ENCODE measurements at regions of chr6 and their contacts with region 1.

Region 1: DNA sequence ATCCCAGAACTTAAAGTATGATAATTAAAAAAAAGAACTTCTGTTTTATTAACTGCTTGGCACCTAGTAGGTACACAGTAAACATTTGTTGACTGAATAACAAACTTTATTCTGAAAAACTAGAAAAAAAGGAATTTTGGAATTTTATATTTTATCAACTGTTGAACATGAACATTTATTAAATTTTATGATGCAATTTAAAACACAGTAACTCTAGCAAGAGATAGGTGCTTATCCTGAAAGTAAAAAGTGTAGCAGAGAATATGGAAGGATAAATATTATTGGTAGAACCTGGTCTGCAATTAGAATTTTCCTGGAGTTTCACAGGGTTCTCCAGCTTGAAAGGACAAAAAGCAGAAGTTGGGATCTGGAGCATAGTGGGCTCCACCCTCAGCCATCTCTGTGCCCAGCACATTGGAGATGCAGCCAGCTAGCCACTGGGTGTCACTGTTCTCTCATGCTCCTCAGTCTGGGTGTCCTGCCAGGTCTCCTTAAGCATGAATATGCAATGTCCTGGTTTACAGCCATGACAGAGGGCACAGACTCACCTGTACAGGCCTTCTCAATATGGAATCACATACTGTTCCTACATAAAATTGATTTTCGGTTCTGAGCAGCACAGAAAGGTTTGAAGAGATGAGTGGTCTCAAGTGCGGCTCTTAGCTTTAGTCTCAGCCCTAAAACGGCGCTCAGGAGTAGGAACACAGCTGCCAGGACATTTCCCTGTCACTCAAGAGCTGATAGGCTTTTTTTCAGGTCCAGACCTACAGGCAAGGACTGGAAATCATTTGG is 31.7 kb upstream of the IL20RA start:
- DNase-seq: no peak
- ATAC-seq: peak; percentile 100
- H3K4me3 ChIP-seq: no peak overlapping the region
- H3K27ac ChIP-seq: peak overlapping the region; percentile 42
- H3K4me1 ChIP-seq: peaks cover 7% of the 10 kb centered on the region
- H3K27me3 ChIP-seq: no peaks in the 10 kb centered on the region
- CTCF ChIP-seq: peak; percentile 90 to 96 (median 93); a peak in 5 of 6 replicates
- EP300 ChIP-seq: no peak
- POLR2A ChIP-seq: no peak
- RAD21 ChIP-seq: peak; percentile 96

Region 2: DNA sequence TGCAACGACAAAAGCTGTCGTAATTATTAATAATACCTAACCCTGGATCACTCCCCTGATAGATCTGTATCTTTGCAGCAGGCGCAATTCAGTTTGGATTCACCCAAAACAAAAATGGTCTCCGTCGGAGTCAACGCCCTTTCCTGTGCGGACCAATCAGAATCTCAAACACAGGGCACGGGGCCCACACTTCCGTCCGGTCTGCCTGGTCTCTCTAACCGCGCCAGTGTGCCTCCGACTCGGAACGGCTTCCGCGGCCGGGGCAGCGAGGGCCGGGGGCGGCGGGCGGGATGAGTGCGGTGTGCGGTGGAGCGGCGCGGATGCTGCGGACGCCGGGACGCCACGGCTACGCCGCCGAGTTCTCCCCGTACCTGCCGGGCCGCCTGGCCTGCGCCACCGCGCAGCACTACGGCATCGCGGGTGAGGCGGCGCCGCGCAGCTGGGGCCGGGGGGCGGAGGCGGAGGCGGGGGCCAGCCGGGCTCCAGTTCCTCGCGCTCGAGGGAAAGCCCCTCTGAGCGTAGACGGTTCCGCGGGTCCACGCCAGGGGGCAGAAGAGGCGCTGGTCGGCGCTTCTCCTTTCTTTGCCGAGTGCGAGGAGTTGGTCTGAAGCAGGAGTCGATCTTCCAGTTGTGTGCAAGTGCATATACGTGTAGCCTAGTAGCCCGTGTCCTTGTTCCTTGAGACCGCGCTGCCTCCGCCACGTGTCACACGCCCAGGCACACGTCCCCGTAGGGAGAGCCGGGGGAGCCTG is 253.9 kb before region 1 on chr6 and contains the start of gene PEX7:
- CTCF ChIA-PET with region 1: no interaction called
- POLR2A ChIA-PET with region 1: no interaction called
- RAD21 ChIA-PET with region 1: no interaction called
- SMC1A ChIA-PET with region 1: no interaction called
- in situ Hi-C with region 1: no loop called
- intact Hi-C with region 1: no loop called
- DNase-seq: peak; percentile 67
- ATAC-seq: peak; percentile 98
- H3K4me3 ChIP-seq: peak within 1 kb of the TSS; percentile 83
- H3K27ac ChIP-seq: peak within 1 kb of the TSS; percentile 76
- H3K4me1 ChIP-seq: no peaks in the 10 kb centered on the region
- H3K27me3 ChIP-seq: no peaks in the 10 kb centered on the region
- CTCF ChIP-seq: peak; percentile 68 to 84 (median 72)
- EP300 ChIP-seq: peak in 1 of 2 experiments; percentile 2; a peak in 1 of 4 replicates
- POLR2A ChIP-seq: peak; percentile 90
- RAD21 ChIP-seq: peak; percentile 32; the same call in 1 of the 2 replicates
- polyA plus RNA-seq, gene PEX7: 0.58 to 2.7 TPM

Region 3: GRCh38 chr6:137089305-137089704 is 12.8 kb after region 1 on chr6:
- CTCF ChIA-PET with region 1: interaction called, 164 read pairs
- POLR2A ChIA-PET with region 1: interaction called, 8 read pairs
- RAD21 ChIA-PET with region 1: interaction called, 80 read pairs
- SMC1A ChIA-PET with region 1: interaction called, 110 read pairs
- in situ Hi-C with region 1: no loop called
- intact Hi-C with region 1: loop called (anchors 1 kb)
- DNase-seq: no peak
- ATAC-seq: no peak
- H3K4me3 ChIP-seq: no peak overlapping the region
- H3K27ac ChIP-seq: no peak overlapping the region
- H3K4me1 ChIP-seq: peaks cover 39% of the 10 kb centered on the region
- H3K27me3 ChIP-seq: no peaks in the 10 kb centered on the region
- CTCF ChIP-seq: no peak
- EP300 ChIP-seq: no peak
- POLR2A ChIP-seq: no peak
- RAD21 ChIP-seq: no peak

Region 4: GRCh38 chr6:137323860-137324259 is 247.4 kb after region 1 on chr6:
- CTCF ChIA-PET with region 1: interaction called, 20 read pairs
- POLR2A ChIA-PET with region 1: no interaction called
- RAD21 ChIA-PET with region 1: interaction called, 3 read pairs
- SMC1A ChIA-PET with region 1: interaction called, 6 read pairs
- in situ Hi-C with region 1: no loop called
- intact Hi-C with region 1: no loop called
- DNase-seq: no peak
- ATAC-seq: peak; percentile 66
- H3K4me3 ChIP-seq: no peak overlapping the region
- H3K27ac ChIP-seq: no peak overlapping the region
- H3K4me1 ChIP-seq: no peaks in the 10 kb centered on the region
- H3K27me3 ChIP-seq: no peaks in the 10 kb centered on the region
- CTCF ChIP-seq: no peak
- EP300 ChIP-seq: no peak
- POLR2A ChIP-seq: no peak
- RAD21 ChIP-seq: no peak

Region 5: GRCh38 chr6:137415127-137415833 is 338.8 kb after region 1 on chr6:
- CTCF ChIA-PET with region 1: interaction called, 6 read pairs
- POLR2A ChIA-PET with region 1: no interaction called
- RAD21 ChIA-PET with region 1: interaction called, 9 read pairs
- SMC1A ChIA-PET with region 1: interaction called, 7 read pairs
- in situ Hi-C with region 1: loop called (anchors 5 kb)
- intact Hi-C with region 1: loop called (anchors 1 kb)
- DNase-seq: no peak
- ATAC-seq: peak; percentile 99
- H3K4me3 ChIP-seq: peak overlapping the region; percentile 62
- H3K27ac ChIP-seq: no peak overlapping the region
- H3K4me1 ChIP-seq: peaks cover 4% of the 10 kb centered on the region
- H3K27me3 ChIP-seq: peaks cover 0 to 3% of the 10 kb centered on the region in 2 experiments; a peak in 1 of 4 replicates
- CTCF ChIP-seq: peak; percentile 79 to 89 (median 85)
- EP300 ChIP-seq: no peak
- POLR2A ChIP-seq: no peak
- RAD21 ChIP-seq: peak; percentile 84

Region 6: DNA sequence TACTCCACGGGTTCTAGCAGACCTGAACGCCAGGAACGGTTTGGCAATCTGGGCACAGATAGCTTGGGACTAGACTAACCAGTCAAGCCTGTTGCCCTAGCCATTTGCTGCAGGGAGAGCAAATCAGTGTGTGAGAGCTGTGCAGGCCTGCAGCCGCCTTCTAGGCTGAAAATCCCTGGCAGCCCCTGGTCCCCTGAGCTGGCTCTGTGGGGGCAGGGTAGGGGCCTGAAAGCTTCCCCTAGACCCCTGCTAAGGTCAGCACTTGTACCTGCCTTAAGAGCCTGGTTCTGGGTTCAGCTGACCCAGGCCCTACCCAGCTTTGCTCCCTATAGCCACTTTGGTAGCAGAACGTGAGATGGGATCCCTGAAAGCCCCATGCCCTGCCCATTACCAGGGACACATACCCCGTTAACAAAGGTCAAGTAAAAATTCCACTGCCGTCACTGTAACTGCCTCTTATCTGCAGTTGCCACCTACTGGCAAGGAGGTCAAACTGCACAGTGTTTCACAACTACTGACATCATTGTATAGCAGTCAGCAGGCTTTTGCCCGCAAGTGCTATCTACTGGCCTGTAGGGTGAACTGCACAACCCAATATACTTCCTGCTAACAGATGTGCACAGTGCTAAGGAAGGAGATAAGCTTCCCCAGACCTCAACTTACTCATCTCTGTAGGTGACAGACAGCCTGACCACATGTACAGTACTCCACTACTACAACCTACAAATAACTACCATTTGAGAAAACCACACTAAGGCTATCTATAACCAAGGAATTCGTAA is 512.8 kb after region 1 on chr6:
- CTCF ChIA-PET with region 1: interaction called, 5 read pairs
- POLR2A ChIA-PET with region 1: no interaction called
- RAD21 ChIA-PET with region 1: interaction called, 14 read pairs
- SMC1A ChIA-PET with region 1: no interaction called
- in situ Hi-C with region 1: no loop called
- intact Hi-C with region 1: no loop called
- DNase-seq: peak; percentile 74
- ATAC-seq: peak; percentile 100
- H3K4me3 ChIP-seq: 0 out of 2 replicates have a peak overlapping the region, but pooled peaks have one; percentile 19
- H3K27ac ChIP-seq: no peak overlapping the region
- H3K4me1 ChIP-seq: peaks cover 2% of the 10 kb centered on the region; the same call in 1 of the 2 replicates
- H3K27me3 ChIP-seq: no peaks in the 10 kb centered on the region
- CTCF ChIP-seq: peak; percentile 62 to 98 (median 81)
- EP300 ChIP-seq: no peak
- POLR2A ChIP-seq: no peak
- RAD21 ChIP-seq: peak; percentile 72

Region 7: DNA sequence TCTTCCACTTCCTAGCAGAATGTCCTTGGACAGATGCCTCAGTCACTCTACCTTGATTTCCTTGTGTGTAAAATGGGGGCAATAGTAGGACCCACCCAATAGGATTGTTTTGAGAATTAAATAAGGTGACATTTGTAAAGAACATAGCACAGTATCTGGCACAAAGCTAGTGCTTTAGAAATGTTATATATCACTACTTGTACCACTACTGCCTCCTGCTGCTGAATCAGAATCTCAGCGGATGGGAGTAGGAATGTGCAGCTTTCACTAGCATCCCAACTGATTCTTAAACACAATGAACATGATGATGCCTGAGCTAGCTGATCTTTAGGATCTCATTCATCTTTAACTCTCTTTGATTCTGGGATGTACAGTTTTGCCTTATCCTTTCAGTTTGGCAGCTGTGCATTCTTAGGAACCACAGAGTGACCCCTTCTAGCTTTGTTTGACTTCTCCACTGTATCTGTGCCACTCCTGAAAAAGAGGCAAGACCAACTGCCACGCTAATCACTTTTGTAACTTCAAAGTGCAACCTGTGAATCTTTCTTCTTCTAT is 1134.6 kb after region 1 on chr6:
- CTCF ChIA-PET with region 1: no interaction called
- POLR2A ChIA-PET with region 1: no interaction called
- RAD21 ChIA-PET with region 1: no interaction called
- SMC1A ChIA-PET with region 1: no interaction called
- in situ Hi-C with region 1: no loop called
- intact Hi-C with region 1: no loop called
- DNase-seq: no peak
- ATAC-seq: no peak
- H3K4me3 ChIP-seq: no peak overlapping the region
- H3K27ac ChIP-seq: no peak overlapping the region
- H3K4me1 ChIP-seq: no peaks in the 10 kb centered on the region
- H3K27me3 ChIP-seq: peaks cover 0 to 5% of the 10 kb centered on the region in 2 experiments; a peak in 2 of 4 replicates
- CTCF ChIP-seq: no peak
- EP300 ChIP-seq: no peak
- POLR2A ChIP-seq: no peak
- RAD21 ChIP-seq: no peak

Measured in GM12878 (cell line).